Vagina (tissue), 2 donors: ENCODE measurements at regions of chr12 and their contacts with region 1.

Region 1: DNA sequence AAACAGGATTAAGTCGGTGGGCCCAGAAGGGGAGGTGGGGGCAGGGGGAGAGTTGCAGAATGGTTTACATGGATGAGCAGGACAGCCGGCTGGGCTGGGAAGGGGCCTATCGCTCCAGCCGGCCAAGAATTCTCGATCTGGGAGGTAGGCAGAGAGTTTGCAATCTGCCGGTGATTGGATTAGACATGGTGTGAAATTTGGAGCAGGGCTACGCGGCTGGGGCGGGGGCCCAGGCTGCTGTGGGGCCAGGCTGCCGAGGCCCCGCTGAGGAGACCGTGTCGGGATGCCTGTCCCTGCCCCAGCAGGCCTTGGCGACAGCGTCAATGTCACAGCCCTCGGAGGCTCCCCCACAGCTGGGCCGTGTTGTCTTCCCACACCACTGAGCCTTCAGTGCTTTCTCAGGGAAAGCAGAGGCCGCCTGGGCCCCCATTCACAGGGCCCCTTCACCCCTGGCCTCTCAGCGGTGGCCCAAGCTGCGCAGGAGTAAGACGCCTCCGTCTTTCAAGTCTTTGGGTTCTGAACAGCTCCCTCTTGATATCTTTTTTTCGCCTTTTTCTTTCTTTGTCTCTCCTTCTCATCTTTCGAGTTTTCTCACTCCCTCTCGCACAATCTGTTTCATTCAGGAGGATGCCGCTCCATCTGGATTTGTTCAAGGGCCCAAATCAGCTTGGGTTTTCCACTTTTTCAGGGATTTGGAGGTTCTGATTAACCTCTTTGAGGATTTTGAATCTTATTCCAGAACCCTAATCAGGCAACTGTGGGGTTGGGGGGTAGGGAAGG is 117.5 kb upstream of the PARP11 start:
- DNase-seq: no peak
- H3K4me3 ChIP-seq: no peak overlapping the region
- H3K27ac ChIP-seq: no peak overlapping the region
- H3K4me1 ChIP-seq: no peaks in the 10 kb centered on the region
- H3K27me3 ChIP-seq: no peaks in the 10 kb centered on the region
- CTCF ChIP-seq: no peak
- POLR2A ChIP-seq: no peak

Region 2: DNA sequence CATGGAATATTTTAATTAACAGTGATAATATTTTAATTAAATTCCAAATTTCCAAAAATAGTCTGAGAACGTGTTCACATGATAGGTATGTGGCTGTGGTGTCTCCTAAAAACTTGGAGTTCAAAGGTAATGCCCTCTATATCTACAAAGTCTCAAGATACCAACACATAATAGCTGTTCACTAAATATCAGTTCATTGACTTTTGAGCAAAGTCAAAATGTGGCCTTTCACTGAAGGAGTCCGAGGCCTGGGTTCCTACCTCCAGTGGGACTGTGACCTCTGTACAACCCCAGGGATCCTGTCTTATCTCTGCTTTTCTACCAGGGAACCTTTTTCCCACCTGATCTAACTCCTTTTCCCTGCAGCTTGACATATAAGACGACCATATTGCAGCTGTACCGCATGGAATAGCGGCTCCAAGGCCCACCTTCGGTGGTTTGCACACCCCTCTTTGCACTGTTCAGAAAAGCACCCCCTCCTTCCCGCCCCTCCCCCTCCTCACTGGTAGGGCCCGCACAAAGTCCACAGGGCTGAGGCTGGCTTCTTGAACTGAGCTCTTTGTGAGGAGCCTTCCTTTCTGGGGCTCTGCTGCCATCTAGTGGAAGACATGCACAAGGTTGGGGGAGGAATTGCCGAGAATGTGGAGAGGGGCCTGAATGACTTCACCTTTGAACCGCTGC is 286.0 kb after region 1 on chr12:
- intact Hi-C with region 1: loop called (anchors 5 kb)
- DNase-seq: peak in 1 of 2 donors; percentile 93
- H3K4me3 ChIP-seq: peak overlapping the region; percentile 50 to 80
- H3K27ac ChIP-seq: peak overlapping the region; percentile 97
- H3K4me1 ChIP-seq: peaks cover 75% of the 10 kb centered on the region
- H3K27me3 ChIP-seq: no peaks in the 10 kb centered on the region
- CTCF ChIP-seq: peak; percentile 88 to 98 (median 96)
- POLR2A ChIP-seq: peak in 1 of 2 donors; percentile 15